ENCODE measurements at regions of chr19 and their contacts with region 1.

Region 1: DNA sequence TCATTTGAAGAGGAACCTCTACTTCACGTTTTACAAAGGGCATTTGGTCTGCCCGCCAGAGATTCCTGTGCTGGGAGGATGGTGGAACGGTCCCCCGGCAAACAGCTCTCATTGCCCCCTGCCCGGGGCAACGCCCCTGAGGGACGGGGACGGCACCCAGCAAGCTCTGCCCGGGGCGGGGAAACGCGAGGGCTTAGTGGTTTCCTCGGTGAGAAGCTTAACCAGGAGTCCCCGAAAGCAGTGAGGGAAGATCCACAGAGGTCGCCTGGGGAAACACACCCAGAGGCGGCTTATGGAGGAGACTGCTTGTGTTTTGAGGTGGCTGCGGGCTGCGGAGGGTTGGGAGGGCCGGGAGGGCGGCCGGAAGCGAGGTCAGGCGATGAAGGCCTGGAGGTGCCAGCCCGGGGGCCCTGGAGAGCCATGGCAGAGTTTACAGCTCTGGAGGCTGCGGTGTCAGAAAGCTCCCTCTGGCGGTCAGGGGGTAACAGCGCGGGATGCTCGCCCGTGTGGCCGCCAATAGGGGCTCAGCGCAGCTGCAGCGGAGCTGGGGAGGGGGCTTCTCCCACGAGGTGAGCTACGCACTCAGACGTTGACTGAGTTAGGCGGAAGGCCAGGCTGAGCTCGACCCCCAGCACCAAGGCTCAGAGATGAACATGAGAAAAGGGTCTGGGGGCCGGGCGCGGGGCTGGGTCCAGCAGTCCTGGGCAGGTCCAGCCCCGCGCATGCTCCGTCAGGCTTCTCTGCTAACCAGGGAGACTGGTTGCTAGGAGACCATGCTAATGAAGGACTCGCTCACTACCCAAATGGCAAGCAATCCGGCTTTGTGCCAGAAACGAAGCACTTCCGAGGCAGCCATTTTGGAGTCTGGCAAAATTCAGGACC is 652 bp upstream of the TPGS1 start:
- DNase-seq: peak; percentile 98
- H3K4me3 Mint-ChIP-seq: peak overlapping the region; percentile 90
- H3K27ac Mint-ChIP-seq: peak overlapping the region; percentile 99
- H3K4me1 Mint-ChIP-seq: peaks cover 37% of the 10 kb centered on the region
- H3K27me3 Mint-ChIP-seq: peaks cover 1% of the 10 kb centered on the region

Region 2: GRCh38 chr19:383922-384798 is 122.5 kb before region 1 on chr19:
- intact Hi-C with region 1: loop called (anchors 5 kb)
- DNase-seq: no peak
- H3K4me3 Mint-ChIP-seq: peak overlapping the region; percentile 67
- H3K27ac Mint-ChIP-seq: no peak overlapping the region
- H3K4me1 Mint-ChIP-seq: peaks cover 18% of the 10 kb centered on the region
- H3K27me3 Mint-ChIP-seq: peaks cover 27% of the 10 kb centered on the region

Region 3: DNA sequence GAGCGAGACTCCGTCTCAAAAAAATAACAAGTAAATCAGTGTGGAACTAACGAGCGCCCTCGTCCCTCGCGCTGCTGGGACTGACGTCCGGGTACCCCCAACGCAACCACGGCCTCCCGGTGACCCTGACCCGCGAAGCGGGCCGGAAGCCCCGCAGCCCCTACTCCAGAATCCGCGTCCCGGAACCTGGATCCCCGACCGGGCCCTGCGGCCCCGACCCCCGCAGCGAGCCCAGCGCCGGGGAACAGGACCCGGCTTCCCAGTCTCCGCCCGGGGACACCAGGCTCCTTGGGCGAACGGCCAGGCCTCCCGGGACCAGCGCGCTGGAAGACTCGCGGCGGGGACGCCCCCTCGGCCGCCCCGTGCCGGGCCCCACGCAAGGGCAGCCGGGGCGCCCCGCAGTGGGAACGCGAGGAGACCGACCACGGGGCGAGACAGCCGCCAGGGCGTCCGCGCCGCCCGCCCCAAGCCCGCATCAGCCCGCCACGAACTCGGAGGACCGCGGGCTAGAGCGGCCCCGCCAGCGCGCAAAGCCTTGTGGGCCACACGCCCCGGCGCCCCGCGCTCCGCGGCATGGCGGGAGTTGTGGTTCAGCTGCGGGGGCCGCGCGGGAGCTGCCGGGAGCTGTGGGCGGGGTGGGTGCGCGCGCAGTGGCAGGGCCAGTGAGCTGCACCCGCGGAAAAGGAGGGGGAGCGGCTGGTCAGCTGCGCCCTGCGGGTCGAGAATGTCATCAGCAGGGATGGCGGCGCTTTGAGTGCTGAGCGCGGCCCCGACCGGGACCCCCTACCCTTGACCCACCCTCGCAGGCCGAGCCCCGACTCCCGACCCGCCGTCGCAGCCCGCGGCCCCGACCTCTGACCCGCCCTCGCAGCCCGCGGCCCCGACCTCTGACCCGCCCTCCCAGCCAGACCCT is 17.9 kb before region 1 on chr19:
- intact Hi-C with region 1: loop called (anchors 1 kb)
- DNase-seq: peak; percentile 97
- H3K4me3 Mint-ChIP-seq: peak overlapping the region; percentile 86
- H3K27ac Mint-ChIP-seq: peak overlapping the region; percentile 94
- H3K4me1 Mint-ChIP-seq: peaks cover 7% of the 10 kb centered on the region
- H3K27me3 Mint-ChIP-seq: peaks cover 5% of the 10 kb centered on the region

Region 4: DNA sequence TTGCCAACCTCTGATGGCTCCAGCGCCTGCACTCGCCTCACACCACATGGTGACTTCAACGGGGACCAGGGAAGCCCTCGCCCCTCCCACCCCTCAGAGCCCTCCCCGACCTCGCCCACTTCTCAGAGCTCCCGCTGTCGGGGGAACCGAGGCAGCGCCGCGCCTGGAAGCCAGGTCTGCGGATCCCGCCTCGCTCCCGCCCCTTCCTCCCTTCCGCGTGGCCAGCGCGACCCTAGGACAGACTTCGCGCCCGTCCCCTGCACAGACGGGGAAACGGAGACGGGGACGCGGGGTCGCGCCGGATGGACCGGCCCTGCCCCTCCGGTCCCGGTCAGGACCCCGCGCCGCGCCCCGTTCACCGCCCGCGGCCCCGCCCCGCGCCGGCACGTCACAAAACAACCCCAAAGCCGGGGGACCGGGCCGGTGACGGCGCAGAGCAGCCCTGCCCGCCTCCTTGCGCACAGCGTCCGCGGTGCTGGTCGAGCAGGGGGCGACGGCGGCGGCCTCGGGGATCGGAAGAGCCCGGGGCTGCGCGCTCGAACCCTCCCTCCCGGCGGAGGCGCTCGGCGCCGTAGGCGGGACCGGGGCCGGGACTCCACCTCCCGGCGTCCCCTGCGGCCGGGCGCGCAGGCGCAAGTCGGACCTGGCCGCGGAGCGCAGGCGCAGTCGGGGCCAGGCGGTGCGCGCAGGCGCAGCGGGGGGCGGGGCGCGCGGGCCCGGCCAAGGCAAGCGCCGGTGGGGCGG is 24.5 kb after region 1 on chr19:
- intact Hi-C with region 1: loop called (anchors 1 kb)
- DNase-seq: peak; percentile 98
- H3K4me3 Mint-ChIP-seq: peak overlapping the region; percentile 83
- H3K27ac Mint-ChIP-seq: peak overlapping the region; percentile 90
- H3K4me1 Mint-ChIP-seq: peaks cover 13% of the 10 kb centered on the region
- H3K27me3 Mint-ChIP-seq: peaks cover 4% of the 10 kb centered on the region

Measured in activated CD4-positive, alpha-beta T cell treated with anti-CD3 and anti-CD28 coated beads, Interleukin-2, amount 10 ng/mL, durations not matched to agents 24 days and 14 days (primary cell).